Dendritic cell treated with granulocyte-macrophage colony-stimulating factor and Interleukin-4, amounts not matched to agents 40 ng/mL and 50 ng/mL, for 4 days (primary cell): ENCODE measurements at regions of chr18 and their contacts with region 1.

Region 1: DNA sequence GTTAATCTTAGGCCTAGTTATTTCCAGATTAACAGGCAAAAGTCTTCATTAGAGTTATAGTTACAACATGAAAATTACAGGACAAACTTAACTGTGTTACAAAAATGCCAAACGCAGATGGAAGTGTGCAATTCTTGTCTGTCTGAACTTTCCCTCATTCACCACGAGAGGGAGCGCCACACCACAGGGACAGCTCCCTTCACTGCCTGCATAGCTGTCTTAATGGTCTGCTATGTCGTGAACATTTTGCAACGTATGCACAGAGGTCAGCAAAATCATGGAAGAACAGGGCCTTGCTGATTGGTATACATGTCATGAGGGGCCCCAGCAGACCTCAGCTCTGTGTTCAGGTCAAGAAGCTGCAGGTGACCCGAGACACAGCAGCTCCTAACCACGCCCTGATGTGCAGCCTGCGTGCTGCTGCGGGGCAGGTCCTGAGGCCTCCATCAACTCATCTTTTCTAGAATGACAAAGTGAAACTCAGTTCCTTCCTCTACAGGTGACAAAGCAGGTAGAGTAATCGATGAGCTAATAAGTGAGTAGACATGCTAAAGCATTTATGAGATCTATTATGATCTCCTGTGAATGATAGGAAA is 78.8 kb upstream of the ATP8B1 start:
- H3K4me3 Mint-ChIP-seq: no peak overlapping the region
- H3K27ac Mint-ChIP-seq: no peak overlapping the region
- H3K4me1 Mint-ChIP-seq: no peaks in the 10 kb centered on the region
- H3K27me3 Mint-ChIP-seq: peaks cover 3% of the 10 kb centered on the region

Region 2: DNA sequence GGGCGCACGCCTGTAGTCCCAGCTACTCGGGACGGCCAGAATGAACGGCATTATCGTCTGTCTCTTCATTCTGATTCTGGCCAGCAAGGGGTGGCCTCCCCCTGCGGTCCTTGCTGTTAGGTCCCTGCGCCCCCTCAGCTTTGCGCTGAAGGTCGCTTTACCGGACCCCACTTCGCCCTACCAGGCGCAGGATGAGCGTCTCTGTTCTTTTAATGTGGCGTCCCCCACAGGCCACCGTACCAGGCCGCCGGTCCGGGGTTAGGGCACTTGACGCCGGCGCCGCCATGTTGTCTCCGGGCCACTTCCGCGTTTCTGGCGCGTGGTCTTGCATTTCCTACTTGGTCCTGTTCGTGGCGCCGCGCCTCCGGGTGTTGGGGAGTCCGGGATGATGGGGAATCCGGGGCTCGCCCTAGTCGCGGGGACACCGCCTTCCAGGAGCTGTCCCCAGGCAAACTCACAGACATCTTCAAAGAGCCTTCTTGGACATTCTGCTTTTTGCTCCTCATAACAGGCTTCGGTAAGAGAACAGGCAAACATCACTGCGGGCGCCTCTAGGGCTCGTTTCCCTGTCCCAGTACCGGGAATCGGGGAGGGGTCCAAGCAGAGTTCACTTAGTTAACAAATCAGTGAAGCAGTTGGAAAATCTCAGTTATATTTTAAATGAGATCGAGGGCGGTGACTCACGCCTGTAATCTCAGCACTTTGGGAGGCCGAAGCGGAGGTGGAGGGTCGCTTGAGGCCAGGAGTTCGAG is 251.7 kb before region 1 on chr18:
- intact Hi-C with region 1: loop called (anchors 2 kb)
- H3K4me3 Mint-ChIP-seq: peak overlapping the region; percentile 90
- H3K27ac Mint-ChIP-seq: peak overlapping the region; percentile 96
- H3K4me1 Mint-ChIP-seq: peaks cover 18% of the 10 kb centered on the region
- H3K27me3 Mint-ChIP-seq: no peaks in the 10 kb centered on the region

Region 3: GRCh38 chr18:58024139-58024538 is 142.2 kb after region 1 on chr18:
- intact Hi-C with region 1: loop called (anchors 10 kb)
- H3K4me3 Mint-ChIP-seq: no peak overlapping the region
- H3K27ac Mint-ChIP-seq: no peak overlapping the region
- H3K4me1 Mint-ChIP-seq: no peaks in the 10 kb centered on the region
- H3K27me3 Mint-ChIP-seq: no peaks in the 10 kb centered on the region

Region 4: DNA sequence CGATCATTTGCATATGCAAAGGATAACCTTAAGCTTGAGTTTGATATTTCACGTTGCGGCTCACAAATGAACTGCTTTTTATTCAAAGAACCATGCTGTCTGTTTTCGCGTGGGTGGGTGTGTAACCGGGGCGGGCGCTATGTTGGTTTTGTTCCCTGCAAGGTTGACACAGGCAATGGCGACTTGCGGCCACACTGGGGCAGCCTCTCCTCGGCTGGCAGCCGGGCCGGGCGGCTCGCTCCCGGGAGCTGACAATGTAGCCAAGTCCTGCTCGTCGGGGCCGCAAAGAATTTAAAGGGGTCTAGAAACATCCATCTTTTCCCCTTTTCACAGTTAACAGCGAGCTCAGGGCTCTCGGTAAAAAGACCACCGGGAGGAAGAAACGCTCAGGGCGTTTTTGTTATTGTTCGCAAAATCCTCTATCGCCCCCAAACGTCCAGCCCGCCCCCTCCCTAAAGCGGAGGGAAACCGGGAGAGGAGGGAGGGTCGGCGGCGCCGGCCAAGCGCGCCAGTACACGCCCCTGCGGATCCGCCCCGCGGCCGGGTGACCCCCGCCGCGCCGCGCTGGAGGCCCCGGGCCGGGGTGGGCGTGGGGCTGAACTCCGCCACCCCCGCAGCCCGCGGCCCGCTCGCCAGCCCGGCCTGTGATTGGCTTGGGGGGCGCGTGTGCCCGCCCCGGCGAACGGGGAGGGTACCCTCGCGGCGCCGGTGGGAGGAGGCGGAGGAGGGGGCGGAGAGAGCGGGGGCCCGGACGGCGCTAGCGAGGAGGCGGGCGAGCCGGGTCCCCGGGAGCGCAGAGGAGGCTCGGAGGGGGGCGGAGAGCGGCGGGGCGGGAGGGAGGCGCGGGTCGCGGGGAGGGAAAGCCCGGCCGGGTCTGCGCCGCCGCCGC is 161.8 kb after region 1 on chr18 and contains the start of gene NEDD4L:
- intact Hi-C with region 1: no loop called
- H3K4me3 Mint-ChIP-seq: peak within 1 kb of the TSS; percentile 85
- H3K27ac Mint-ChIP-seq: peak within 1 kb of the TSS; percentile 48
- H3K4me1 Mint-ChIP-seq: peaks cover 51% of the 10 kb centered on the region
- H3K27me3 Mint-ChIP-seq: peaks cover 53% of the 10 kb centered on the region

Region 5: GRCh38 chr18:58117786-58118403 is 236.0 kb after region 1 on chr18:
- intact Hi-C with region 1: loop called (anchors 1 kb)
- H3K4me3 Mint-ChIP-seq: no peak overlapping the region
- H3K27ac Mint-ChIP-seq: no peak overlapping the region
- H3K4me1 Mint-ChIP-seq: no peaks in the 10 kb centered on the region
- H3K27me3 Mint-ChIP-seq: peaks cover 10% of the 10 kb centered on the region

Region 6: GRCh38 chr18:58124475-58124874 is 242.6 kb after region 1 on chr18:
- intact Hi-C with region 1: loop called (anchors 1 kb)
- H3K4me3 Mint-ChIP-seq: no peak overlapping the region
- H3K27ac Mint-ChIP-seq: no peak overlapping the region
- H3K4me1 Mint-ChIP-seq: no peaks in the 10 kb centered on the region
- H3K27me3 Mint-ChIP-seq: peaks cover 1% of the 10 kb centered on the region

Region 7: GRCh38 chr18:58493516-58494253 is 611.8 kb after region 1 on chr18:
- intact Hi-C with region 1: loop called (anchors 10 kb)
- H3K4me3 Mint-ChIP-seq: no peak overlapping the region
- H3K27ac Mint-ChIP-seq: no peak overlapping the region
- H3K4me1 Mint-ChIP-seq: no peaks in the 10 kb centered on the region
- H3K27me3 Mint-ChIP-seq: peaks cover 39% of the 10 kb centered on the region